H1 (cell line): ENCODE measurements at regions of chr1 and their contacts with region 1.

Region 1: DNA sequence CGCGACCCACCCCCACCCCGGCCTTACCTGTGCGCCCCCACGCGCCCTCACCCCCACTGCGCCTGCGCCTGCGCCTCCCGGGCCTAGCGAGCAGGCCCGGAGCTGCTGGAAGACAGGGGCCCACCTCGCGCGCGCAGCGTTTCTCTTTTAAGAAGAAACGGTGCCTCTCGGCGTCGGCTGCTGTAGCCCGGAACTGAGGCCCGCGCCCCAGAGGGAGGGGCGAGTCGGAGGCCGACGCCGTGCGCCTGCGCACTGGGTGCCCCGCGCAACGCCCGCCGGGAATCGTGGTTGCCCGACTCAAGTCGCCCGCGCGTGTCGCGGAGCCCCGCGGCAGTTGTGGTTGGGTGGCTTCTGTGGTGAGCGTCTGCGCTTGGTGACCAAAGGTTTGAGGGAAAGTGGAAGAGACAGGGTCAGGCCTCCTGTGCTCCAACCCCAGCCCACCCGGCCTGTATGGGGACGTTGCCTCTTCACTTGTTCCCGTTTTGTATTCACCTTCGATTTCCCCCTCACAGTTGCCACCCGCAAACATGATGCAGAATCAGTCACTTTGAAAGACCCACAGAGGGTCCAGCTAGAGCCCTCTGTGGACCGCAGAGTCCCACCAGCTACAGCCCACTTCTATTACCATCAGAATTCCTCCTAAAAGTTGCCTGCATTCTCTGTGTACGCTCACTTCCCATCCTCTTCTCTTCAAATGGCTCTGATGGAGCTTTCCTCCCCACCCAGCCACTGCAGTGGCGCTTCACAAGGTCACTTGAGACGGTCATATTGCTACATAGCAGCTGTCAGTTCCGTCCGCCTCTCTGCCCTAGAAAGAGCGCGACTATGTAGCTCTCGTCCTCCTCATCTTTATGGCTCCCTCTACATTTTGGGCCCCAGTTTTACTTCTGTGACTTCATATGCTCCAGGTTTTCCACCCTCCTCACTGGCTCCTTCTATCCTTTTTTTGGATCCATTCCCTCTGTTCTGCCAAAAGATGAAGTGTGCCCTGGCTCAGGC is at the start of gene ZNF692:
- DNase-seq: peak; percentile 88 to 96
- H3K4me3 ChIP-seq: peak within 1 kb of the TSS; percentile 76 to 93 (median 84)
- H3K27ac ChIP-seq: peak within 1 kb of the TSS; percentile 75
- H3K4me1 ChIP-seq: peaks cover 3 to 18% (median 14%) of the 10 kb centered on the region in 4 experiments
- H3K27me3 ChIP-seq: peaks cover 0 to 15% (median 8%) of the 10 kb centered on the region in 4 experiments; a peak in 5 of 7 replicates
- CTCF ChIP-seq: no peak
- EP300 ChIP-seq: no peak
- POLR2A ChIP-seq: peak; percentile 3 to 60; a peak in 2 of 3 replicates
- RAD21 ChIP-seq: no peak
- total RNA-seq, gene ZNF692: 38.4 and 39.7 TPM in 2 replicates

Region 2: DNA sequence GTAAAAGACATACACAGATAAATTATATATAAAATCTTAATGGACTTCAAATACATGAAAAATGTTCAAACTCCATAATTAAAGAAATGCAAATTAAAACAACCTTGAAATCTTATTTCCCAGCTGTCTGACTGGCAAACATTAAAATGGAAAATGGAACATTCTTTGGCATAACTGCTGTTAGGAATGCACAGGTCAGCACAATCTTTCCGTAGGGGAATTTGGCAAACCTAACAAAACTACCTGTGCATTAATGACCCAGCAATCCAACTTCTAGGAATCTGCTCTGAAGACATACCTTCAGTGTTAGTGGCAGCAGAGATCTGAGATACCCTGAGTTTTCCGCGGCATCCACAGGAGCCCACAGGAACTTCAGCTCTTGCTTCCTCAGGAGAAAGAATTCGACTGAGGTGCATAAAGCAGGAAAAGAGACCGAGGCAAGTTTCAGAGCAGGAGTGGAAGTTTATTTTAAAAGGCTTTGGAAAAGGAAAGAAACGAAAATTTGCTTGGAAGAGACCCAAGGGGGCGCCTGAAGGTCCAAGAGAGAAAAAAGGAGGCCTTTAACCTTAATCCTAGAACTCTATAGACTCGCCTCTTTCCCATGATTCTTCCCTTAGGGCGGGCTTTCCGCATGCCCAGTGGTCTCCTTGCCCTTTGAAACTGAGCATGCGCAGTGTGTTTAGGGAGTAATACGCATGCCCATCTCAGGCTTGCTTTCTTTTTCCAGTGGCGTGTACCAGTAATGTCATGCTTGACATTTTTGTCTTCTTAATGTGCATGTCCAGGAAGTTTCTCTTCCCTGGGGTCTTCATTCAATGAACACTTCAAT is 128.5 kb before region 1 on chr1:
- CTCF ChIA-PET with region 1: no interaction called
- POLR2A ChIA-PET with region 1: no interaction called
- DNase-seq: no peak
- H3K4me3 ChIP-seq: no peak overlapping the region
- H3K27ac ChIP-seq: no peak overlapping the region
- H3K4me1 ChIP-seq: no peaks in the 10 kb centered on the region
- H3K27me3 ChIP-seq: no peaks in the 10 kb centered on the region
- CTCF ChIP-seq: no peak
- EP300 ChIP-seq: no peak
- POLR2A ChIP-seq: no peak
- RAD21 ChIP-seq: no peak

Region 3: DNA sequence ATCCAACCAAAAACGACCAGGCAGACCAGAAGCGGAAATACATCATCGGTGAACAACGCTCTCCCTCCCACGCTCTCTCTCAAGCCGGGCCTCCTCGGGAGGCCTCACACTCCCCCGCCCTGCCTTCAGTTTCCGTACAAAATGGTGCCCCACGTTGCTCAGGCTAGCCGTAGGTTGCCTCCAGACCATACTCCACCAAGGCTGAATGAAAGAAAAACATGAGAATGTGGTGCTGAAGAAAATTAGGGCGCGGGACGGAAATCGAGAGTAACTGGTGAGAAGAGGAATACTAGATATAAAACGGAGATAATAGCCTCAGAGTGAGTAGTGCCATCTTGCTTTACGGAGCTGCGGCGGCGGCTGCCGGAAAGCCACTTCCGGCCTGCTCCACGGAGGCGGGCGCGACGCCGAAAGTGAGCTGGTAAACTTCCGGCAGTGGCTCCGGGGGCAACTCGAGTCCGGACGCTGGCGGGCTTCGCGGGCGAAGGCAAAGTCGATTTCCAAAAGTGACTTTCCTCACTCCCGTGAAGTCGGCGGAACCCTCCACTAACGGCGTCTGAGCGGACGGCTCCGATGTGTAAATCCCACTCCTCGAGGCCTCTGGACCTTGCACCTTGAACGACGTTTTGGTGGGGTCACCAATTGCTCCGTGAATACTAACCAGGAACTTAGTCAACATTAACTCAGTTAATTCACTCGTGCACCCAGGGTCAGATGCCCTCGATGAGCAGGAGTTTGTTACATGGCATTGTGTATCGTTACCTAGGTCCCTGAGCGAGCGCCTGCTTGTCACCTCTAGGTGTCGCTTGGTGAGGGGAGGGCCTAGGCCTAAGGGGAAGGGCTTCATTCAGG is 33.1 kb before region 1 on chr1 and contains the start of gene SH3BP5L:
- CTCF ChIA-PET with region 1: interaction called, 8 read pairs
- POLR2A ChIA-PET with region 1: interaction called, 18 read pairs
- DNase-seq: peak; percentile 74 to 87
- H3K4me3 ChIP-seq: peak within 1 kb of the TSS; percentile 88 to 98 (median 94)
- H3K27ac ChIP-seq: peak within 1 kb of the TSS; percentile 98
- H3K4me1 ChIP-seq: peaks cover 0 to 5% (median 1%) of the 10 kb centered on the region in 4 experiments; a peak in 5 of 7 replicates
- H3K27me3 ChIP-seq: no peaks in the 10 kb centered on the region
- CTCF ChIP-seq: peak; percentile 42 to 71 (median 60)
- EP300 ChIP-seq: no peak
- POLR2A ChIP-seq: peak in 1 of 2 experiments; percentile 91; a peak in 2 of 3 replicates
- RAD21 ChIP-seq: peak; percentile 27 to 51; a peak in 3 of 4 replicates
- total RNA-seq, gene SH3BP5L: 27.9 and 28.4 TPM in 2 replicates

Region 4: DNA sequence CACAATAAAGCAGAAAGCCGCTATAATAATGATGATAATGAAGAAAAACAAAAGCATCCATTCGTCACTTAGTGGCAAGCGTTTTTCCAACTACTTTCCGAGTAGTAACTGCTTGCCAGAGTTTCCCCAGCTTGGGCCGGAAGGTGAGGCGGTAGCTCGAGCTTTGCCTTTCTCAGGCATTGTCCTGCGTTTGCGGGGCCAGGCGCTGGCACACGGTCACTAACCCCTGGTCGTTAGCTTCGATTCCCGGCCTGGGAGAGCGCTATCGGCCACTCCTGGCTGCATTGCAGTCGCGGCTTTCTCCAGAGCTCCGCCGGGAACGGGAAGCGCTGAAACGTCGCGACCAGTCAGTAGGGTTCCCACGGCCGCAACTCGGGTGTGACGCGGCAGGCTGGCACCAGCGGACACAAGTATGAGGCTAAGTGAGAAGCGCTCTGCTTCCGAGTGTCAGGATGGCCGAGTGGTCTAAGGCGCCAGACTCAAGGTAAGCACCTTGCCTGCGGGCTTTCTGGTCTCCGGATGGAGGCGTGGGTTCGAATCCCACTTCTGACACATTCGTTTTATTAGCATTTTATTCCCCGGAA is 14.3 kb after region 1 on chr1:
- CTCF ChIA-PET with region 1: interaction called, 6 read pairs
- POLR2A ChIA-PET with region 1: interaction called, 46 read pairs
- DNase-seq: peak; percentile 93 to 100
- H3K4me3 ChIP-seq: peak overlapping the region; percentile 85 to 94 (median 90)
- H3K27ac ChIP-seq: peak overlapping the region; percentile 62; the same call in 1 of the 2 replicates
- H3K4me1 ChIP-seq: peaks cover 0 to 2% (median 0%) of the 10 kb centered on the region in 4 experiments; a peak in 1 of 7 replicates
- H3K27me3 ChIP-seq: no peaks in the 10 kb centered on the region
- CTCF ChIP-seq: no peak
- EP300 ChIP-seq: no peak
- POLR2A ChIP-seq: no peak
- RAD21 ChIP-seq: peak in 1 of 2 experiments; percentile 1; a peak in 1 of 4 replicates

Region 5: GRCh38 chr1:248906009-248906752 is 47.0 kb after region 1 on chr1 and contains the start of gene PGBD2:
- CTCF ChIA-PET with region 1: interaction called, 5 read pairs
- POLR2A ChIA-PET with region 1: interaction called, 18 read pairs
- DNase-seq: peak; percentile 81 to 99
- H3K4me3 ChIP-seq: peak within 1 kb of the TSS; percentile 52 to 82 (median 76)
- H3K27ac ChIP-seq: peak within 1 kb of the TSS; percentile 99
- H3K4me1 ChIP-seq: peaks cover 0 to 8% (median 3%) of the 10 kb centered on the region in 4 experiments; a peak in 3 of 7 replicates
- H3K27me3 ChIP-seq: no peaks in the 10 kb centered on the region
- CTCF ChIP-seq: peak; percentile 74 to 88 (median 75)
- EP300 ChIP-seq: peak; percentile 9 to 59; a peak in 2 of 3 replicates
- POLR2A ChIP-seq: peak; percentile 94 to 98
- RAD21 ChIP-seq: peak; percentile 52 to 58; a peak in 3 of 4 replicates
- total RNA-seq, gene PGBD2: 7.7 and 7.8 TPM in 2 replicates